ENCODE measurements at regions of chr2 and their contacts with region 1.

Region 1: GRCh38 chr2:132815522-132815921 is 145.5 kb upstream of the LYPD1 start:
- DNase-seq: no peak
- ATAC-seq: no peak
- H3K4me3 ChIP-seq: no peak overlapping the region
- H3K27ac ChIP-seq: no peak overlapping the region
- H3K4me1 ChIP-seq: no peaks in the 10 kb centered on the region
- H3K27me3 ChIP-seq: 0 out of 2 replicates have a peak, but pooled peaks cover 3% of the 10 kb centered on the region
- CTCF ChIP-seq: no peak
- POLR2A ChIP-seq: no peak
- RAD21 ChIP-seq: no peak

Region 2: DNA sequence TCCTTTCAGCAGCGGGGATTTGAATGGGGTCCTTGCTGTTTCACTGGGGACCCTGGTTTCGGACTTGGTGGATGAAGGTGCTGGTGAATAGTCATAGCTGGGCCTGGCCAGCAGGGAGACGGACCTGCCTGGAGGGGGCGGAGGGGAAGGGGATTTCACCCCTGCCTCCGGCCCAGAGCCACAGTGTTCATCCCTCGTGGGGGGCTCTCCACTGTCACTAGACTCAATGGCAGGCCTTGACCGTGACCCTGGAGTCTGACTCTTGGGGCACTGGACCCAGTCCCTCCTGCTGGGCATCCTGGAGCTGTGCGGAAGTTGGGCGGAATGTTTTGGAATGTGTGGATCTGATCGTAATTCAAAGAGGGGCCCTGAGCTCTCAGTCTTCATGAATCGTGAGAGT is 31.6 kb before region 1 on chr2:
- CTCF ChIA-PET with region 1: no interaction called
- POLR2A ChIA-PET with region 1: no interaction called
- RAD21 ChIA-PET with region 1: no interaction called
- intact Hi-C with region 1: no loop called
- DNase-seq: no peak
- ATAC-seq: no peak
- H3K4me3 ChIP-seq: no peak overlapping the region
- H3K27ac ChIP-seq: no peak overlapping the region
- H3K4me1 ChIP-seq: no peaks in the 10 kb centered on the region
- H3K27me3 ChIP-seq: no peaks in the 10 kb centered on the region
- CTCF ChIP-seq: no peak
- POLR2A ChIP-seq: no peak
- RAD21 ChIP-seq: no peak

Region 3: GRCh38 chr2:132795220-132795619 is 20.3 kb before region 1 on chr2:
- CTCF ChIA-PET with region 1: no interaction called
- POLR2A ChIA-PET with region 1: no interaction called
- RAD21 ChIA-PET with region 1: no interaction called
- intact Hi-C with region 1: loop called (anchors 2 kb)
- DNase-seq: no peak
- ATAC-seq: no peak
- H3K4me3 ChIP-seq: no peak overlapping the region
- H3K27ac ChIP-seq: no peak overlapping the region
- H3K4me1 ChIP-seq: no peaks in the 10 kb centered on the region
- H3K27me3 ChIP-seq: no peaks in the 10 kb centered on the region
- CTCF ChIP-seq: no peak
- POLR2A ChIP-seq: no peak
- RAD21 ChIP-seq: no peak

Measured in HCT116 (cell line).